Activated T-helper 1 cell treated with anti-CD3 and anti-CD28 coated beads, Interleukin-12 subunit alpha, Interleukin-12 subunit beta, Interleukin-2, Interleukin-4 antibody, amounts not matched to agents 30 ng/mL and 10 ng/mL and 1 ng/mL, durations not matched to agents 14 hours and 24 hours and 36 hours (primary cell): ENCODE measurements at regions of chr9 and their contacts with region 1.

Region 1: DNA sequence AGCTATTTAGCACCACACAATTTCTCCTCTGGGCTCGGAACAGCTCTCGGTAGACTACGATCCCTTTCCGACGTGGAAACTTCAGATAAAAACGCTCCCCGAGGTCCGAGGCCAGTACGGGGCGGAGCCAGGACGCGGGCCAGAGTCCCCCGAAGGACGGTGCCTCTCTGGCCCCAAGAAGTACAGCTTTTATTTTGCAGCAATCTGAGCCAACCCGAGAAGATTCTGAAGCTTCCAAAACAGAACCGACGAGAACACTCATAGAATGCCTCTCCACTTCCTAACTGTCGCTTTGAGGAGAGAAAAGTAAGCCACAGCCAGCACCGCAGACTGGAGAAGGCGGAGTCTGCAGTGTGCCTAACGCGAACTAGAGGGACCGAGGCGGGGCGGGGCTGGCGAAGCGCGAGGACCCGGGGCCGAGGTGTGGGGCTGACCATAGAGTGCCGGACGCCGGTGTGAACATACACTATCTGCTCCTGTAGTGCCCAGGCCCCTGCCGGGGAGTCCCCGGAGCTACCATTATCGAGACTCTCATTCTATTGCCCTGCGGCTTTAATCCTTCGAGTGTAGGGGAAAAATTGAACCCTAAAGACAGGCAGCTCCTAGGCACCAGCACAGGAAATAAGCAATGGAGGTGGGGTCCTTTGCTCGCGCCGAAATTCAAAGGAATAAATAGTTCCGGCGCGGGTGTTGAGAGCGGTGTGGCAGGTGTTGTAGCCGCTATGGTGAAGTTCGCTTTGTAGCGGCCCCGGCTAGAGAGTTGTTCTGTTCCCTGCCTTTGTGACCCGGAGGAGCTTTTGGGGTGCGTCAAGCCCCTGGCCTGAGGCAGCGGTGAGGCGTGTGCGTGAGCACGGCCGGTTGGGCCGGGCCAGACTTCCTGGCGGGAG is at the start of gene SMC2:
- DNase-seq: peak; percentile 90
- H3K4me3 Mint-ChIP-seq: peak within 1 kb of the TSS; percentile 98
- H3K27ac Mint-ChIP-seq: peak within 1 kb of the TSS; percentile 100
- H3K4me1 Mint-ChIP-seq: peaks cover 37% of the 10 kb centered on the region
- H3K27me3 Mint-ChIP-seq: no peaks in the 10 kb centered on the region
- total RNA-seq, gene SMC2: 51.9 and 52.5 TPM in 2 replicates

Region 2: DNA sequence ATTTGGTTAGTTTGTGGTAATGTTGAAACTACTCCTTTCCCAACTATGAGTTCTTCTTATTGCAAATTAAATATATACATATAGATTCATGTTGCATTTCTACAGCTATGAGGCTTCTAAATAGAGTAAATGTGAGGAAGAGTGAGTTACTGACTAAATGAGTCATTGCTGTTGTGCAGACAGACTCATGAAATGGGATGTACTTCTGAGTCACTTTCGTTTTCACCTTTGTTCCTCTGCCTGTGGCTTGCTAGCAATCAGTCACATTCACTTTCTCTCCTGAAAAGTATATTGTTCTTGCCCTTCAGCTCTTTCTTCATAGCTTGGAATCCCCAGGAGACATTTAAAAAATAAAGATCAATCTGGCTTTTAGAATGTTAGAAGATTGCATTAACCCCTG is 295.3 kb before region 1 on chr9:
- intact Hi-C with region 1: loop called (anchors 2 kb)
- DNase-seq: no peak
- H3K4me3 Mint-ChIP-seq: no peak overlapping the region
- H3K27ac Mint-ChIP-seq: no peak overlapping the region
- H3K4me1 Mint-ChIP-seq: peaks cover 6% of the 10 kb centered on the region
- H3K27me3 Mint-ChIP-seq: no peaks in the 10 kb centered on the region

Region 3: GRCh38 chr9:103991698-103992097 is 102.2 kb before region 1 on chr9:
- intact Hi-C with region 1: loop called (anchors 2 kb)
- DNase-seq: peak; percentile 22
- H3K4me3 Mint-ChIP-seq: peak overlapping the region; percentile 45
- H3K27ac Mint-ChIP-seq: peak overlapping the region; percentile 71
- H3K4me1 Mint-ChIP-seq: peaks cover 30% of the 10 kb centered on the region
- H3K27me3 Mint-ChIP-seq: no peaks in the 10 kb centered on the region

Region 4: DNA sequence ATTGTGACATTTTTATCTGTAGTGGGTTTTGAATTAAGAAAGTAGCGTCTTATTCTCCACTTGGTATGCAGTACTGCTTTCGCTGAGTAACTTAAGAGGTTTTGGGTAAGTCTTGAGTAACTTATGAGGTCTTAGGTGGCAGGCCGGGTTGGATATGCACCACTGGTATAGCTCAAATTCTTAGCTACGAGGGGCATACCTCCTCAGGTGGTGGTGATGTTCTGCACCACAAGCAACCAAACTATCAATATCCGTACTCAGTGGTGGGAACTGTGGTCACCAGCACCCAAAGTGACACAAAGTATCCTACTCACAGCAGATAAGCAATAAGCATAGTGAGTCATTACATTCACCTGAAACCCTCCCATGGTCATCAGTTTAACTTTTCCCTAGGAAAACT is 13.9 kb after region 1 on chr9:
- intact Hi-C with region 1: loop called (anchors 2 kb)
- DNase-seq: no peak
- H3K4me3 Mint-ChIP-seq: no peak overlapping the region
- H3K27ac Mint-ChIP-seq: no peak overlapping the region
- H3K4me1 Mint-ChIP-seq: peaks cover 7% of the 10 kb centered on the region
- H3K27me3 Mint-ChIP-seq: no peaks in the 10 kb centered on the region

Region 5: GRCh38 chr9:104968025-104968982 is 874.4 kb after region 1 on chr9:
- intact Hi-C with region 1: loop called (anchors 10 kb)
- DNase-seq: peak; percentile 84
- H3K4me3 Mint-ChIP-seq: peak overlapping the region; percentile 92
- H3K27ac Mint-ChIP-seq: peak overlapping the region; percentile 66
- H3K4me1 Mint-ChIP-seq: peaks cover 13% of the 10 kb centered on the region
- H3K27me3 Mint-ChIP-seq: peaks cover 21% of the 10 kb centered on the region

Region 6: DNA sequence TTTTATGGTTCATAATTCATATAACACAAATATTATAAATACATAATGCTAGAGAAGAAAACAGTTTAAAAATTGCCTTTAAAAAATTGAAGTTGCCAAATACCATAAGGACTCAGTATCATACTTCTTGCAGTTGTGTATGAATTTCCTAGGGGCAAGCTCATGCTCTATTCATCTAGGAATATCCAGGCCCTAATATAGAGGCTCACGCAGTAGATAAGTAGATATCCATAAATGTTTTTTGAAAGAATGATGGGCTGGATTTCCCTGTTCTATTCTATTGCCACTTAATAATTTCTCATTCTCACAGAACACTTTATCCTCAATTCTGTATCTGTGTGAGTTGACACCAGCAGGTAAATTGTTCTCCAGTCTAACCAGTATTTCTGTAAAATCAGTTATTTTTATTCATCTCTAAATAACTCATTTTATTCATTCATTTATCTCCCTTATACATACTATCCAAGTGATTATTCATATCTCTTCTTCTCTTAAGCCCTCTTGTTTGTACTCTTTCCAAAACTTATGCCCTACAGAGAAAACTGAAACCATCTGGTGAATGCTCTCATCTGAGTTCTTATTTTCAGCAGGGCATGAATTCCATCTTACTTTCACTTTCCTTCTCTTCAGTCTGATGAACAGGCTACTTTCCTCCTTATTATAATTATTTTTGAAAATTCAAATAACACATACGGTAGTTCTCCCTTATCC is 1247.7 kb after region 1 on chr9:
- intact Hi-C with region 1: loop called (anchors 10 kb)
- DNase-seq: no peak
- H3K4me3 Mint-ChIP-seq: no peak overlapping the region
- H3K27ac Mint-ChIP-seq: no peak overlapping the region
- H3K4me1 Mint-ChIP-seq: peaks cover 23% of the 10 kb centered on the region
- H3K27me3 Mint-ChIP-seq: no peaks in the 10 kb centered on the region